Dendritic cell treated with granulocyte-macrophage colony-stimulating factor and Interleukin-4, amounts not matched to agents 40 ng/mL and 50 ng/mL, for 4 days (primary cell): ENCODE measurements at regions of chr20 and their contacts with region 1.

Region 1: DNA sequence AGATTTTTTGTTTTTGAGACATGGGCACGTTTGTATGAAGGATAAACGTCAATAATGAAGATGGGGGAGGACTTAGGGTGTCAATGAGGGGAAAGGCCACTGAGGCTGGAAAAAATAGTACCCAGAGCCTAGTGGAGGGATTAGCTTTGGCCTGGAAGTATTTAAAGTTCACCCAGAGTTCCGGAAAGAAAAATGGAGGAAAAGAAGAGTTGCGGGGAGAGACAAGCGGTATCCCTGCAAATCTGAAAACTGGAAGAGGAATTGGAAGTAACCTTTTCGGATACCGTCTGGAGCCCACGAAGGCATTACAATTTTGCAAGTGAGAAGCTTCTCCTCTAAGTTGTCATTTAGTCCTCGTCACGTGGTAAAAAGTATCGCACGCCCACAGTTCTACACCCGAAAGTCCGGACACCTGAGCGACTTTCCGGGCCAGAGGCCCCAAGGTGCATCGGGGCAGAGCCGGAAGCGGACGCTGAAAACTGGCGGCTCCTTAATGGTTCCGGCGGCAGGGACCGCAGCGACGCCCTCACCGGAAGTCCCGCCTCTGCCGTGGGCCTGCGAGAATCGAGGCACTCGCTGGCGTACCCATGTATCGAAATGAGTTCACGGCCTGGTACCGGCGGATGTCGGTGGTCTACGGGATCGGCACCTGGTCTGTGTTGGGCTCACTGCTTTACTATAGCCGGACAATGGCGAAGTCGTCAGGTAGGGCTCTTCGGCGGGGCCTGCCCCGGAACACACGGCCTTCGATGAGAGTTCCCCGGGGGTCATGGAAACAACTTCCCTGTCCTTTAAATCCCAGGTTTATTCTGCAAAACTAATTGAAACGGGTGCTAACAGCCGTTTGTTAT is at the start of gene SMIM26:
- H3K4me3 Mint-ChIP-seq: peak within 1 kb of the TSS; percentile 90
- H3K27ac Mint-ChIP-seq: peak within 1 kb of the TSS; percentile 95
- H3K4me1 Mint-ChIP-seq: peaks cover 21% of the 10 kb centered on the region
- H3K27me3 Mint-ChIP-seq: no peaks in the 10 kb centered on the region

Region 2: DNA sequence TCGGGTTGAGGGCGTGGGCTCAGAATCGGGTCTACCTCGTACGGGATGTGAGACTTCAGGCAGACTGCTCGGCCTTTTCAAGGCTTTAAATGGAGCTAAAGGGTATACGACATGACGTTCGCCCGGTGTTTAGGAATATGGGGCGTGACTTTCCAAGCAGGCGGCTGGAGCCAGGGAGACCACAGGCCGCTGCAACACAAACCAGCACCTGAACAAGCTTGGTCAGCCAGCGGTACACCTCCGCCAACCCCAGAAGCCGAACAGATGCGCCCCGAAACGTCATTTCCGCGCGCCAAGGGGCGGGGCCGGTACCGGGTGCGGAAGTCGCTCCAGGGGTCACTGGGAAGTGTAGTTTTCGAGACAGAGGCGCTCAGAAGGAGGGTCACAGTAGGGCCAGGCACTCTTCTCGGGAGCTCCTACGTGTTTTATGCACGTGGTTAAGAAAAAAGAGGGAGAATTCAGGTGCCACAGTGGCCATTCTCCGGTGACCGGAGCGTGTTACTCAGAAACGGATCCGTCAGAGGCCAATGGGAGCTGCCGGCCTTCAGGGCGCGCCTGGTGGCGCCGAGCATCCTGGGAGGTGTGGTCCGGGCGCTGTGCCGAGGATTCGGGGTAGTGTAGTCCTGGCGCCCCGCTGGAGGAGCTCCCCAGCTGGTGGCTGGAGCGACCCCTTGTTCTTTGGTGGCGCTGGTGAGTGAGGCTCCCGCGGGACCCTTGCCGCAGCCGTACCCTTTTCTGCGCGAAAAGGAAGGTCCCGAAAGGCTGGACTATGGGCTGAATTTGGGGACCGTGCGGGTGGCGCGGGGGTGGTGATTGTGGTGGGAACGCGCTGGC is 279.0 kb before region 1 on chr20 and contains the start of gene ZNF133:
- intact Hi-C with region 1: loop called (anchors 10 kb)
- H3K4me3 Mint-ChIP-seq: peak within 1 kb of the TSS; percentile 94
- H3K27ac Mint-ChIP-seq: peak within 1 kb of the TSS; percentile 98
- H3K4me1 Mint-ChIP-seq: peaks cover 17% of the 10 kb centered on the region
- H3K27me3 Mint-ChIP-seq: peaks cover 22% of the 10 kb centered on the region

Region 3: DNA sequence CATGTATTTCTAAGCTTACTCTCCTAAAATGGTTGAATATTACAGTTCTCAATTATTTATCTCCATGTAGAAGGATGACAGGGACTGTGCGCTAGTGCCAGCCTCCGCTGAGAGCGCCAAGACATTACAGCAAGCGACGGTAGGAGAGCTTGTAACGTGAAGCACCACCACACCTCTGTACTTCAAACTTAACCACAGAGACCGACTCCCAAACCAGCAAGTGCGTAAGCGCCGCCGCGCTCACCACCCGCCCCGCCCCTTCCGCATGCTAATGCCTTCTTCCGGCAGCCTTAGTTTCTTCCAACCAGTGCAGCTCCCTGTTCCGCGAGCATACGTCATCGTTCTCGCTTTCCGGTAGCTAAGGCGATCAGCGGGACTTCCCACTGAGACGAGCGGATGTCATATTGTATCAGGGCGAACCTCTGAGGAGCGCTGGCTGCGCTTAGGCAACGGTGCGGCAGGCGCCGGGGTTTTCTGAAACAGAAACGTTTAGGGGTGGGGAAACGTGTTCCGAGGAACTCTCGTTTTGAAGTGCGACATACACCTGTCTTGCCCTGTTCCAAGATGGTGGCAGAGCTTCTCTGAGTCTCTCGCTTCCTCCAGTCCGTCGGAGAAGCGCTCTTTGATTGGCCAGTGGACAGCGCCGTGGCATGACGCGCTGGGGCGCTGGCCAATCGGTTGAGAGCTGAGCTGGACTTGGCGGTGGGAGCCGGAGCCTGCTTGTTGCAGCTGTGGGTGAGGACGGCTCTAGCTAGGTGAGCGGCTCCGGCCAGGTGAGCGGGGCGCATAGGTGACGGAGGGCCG is 59.7 kb before region 1 on chr20 and contains the start of gene SEC23B:
- intact Hi-C with region 1: loop called (anchors 1 kb)
- H3K4me3 Mint-ChIP-seq: peak within 1 kb of the TSS; percentile 100
- H3K27ac Mint-ChIP-seq: peak within 1 kb of the TSS; percentile 97
- H3K4me1 Mint-ChIP-seq: peaks cover 44% of the 10 kb centered on the region
- H3K27me3 Mint-ChIP-seq: peaks cover 3% of the 10 kb centered on the region

Region 4: GRCh38 chr20:18587665-18588573 is 20.8 kb after region 1 on chr20 and contains the start of gene DTD1:
- intact Hi-C with region 1: loop called (anchors 1 kb)
- H3K4me3 Mint-ChIP-seq: peak within 1 kb of the TSS; percentile 83
- H3K27ac Mint-ChIP-seq: peak within 1 kb of the TSS; percentile 76
- H3K4me1 Mint-ChIP-seq: peaks cover 12% of the 10 kb centered on the region
- H3K27me3 Mint-ChIP-seq: peaks cover 5% of the 10 kb centered on the region

Region 5: DNA sequence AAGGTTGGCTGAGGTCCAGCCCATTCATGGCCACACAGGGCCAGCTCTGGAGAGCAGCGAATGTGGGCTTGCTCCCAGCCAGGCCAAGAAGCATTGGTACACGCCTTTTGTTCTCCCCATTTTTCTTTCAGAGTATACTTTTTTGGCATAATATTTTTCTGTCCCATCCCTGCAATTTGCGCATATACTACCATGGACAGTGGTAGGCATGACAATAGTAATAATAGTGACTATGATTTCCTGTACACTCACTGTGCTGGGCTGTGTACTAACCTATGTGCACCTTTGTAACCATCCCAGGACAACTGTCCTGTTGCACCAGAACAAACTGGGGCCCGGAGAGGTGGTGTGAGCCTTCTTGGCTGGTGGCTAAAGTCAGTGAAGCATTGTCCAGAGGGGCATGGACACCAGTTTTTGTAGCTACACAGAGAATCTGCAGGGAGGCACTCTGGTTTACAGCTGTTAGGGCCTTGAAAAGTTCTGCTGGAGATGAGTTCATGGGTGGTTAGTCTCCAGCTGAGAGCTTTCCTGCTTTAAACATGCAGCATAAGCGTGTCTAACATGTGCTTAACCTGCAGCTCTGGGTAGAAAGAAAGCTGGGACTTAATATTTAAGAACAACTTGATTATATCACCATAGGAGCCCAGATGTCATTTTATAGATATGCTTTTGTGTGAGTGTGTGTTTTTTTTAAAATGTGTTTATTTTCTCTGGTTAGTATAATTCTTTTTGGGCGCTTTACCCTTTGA is 59.0 kb after region 1 on chr20:
- intact Hi-C with region 1: no loop called
- H3K4me3 Mint-ChIP-seq: no peak overlapping the region
- H3K27ac Mint-ChIP-seq: no peak overlapping the region
- H3K4me1 Mint-ChIP-seq: no peaks in the 10 kb centered on the region
- H3K27me3 Mint-ChIP-seq: no peaks in the 10 kb centered on the region

Region 6: GRCh38 chr20:18793625-18794427 is 226.7 kb after region 1 on chr20:
- intact Hi-C with region 1: loop called (anchors 5 kb)
- H3K4me3 Mint-ChIP-seq: peak overlapping the region; percentile 85
- H3K27ac Mint-ChIP-seq: peak overlapping the region; percentile 96
- H3K4me1 Mint-ChIP-seq: peaks cover 7% of the 10 kb centered on the region
- H3K27me3 Mint-ChIP-seq: peaks cover 25% of the 10 kb centered on the region

Region 7: GRCh38 chr20:18857640-18858039 is 290.5 kb after region 1 on chr20:
- intact Hi-C with region 1: no loop called
- H3K4me3 Mint-ChIP-seq: no peak overlapping the region
- H3K27ac Mint-ChIP-seq: no peak overlapping the region
- H3K4me1 Mint-ChIP-seq: peaks cover 8% of the 10 kb centered on the region
- H3K27me3 Mint-ChIP-seq: no peaks in the 10 kb centered on the region